Calu3 (cell line): ENCODE measurements at regions of chr13 and their contacts with region 1.

Region 1: GRCh38 chr13:70723732-70724131 is 615.5 kb upstream of the KLHL1 start:
- DNase-seq: no peak
- H3K4me3 Mint-ChIP-seq: no peak overlapping the region
- H3K27ac Mint-ChIP-seq: no peak overlapping the region
- H3K4me1 Mint-ChIP-seq: no peaks in the 10 kb centered on the region
- H3K27me3 Mint-ChIP-seq: no peaks in the 10 kb centered on the region
- CTCF ChIP-seq: no peak

Region 2: DNA sequence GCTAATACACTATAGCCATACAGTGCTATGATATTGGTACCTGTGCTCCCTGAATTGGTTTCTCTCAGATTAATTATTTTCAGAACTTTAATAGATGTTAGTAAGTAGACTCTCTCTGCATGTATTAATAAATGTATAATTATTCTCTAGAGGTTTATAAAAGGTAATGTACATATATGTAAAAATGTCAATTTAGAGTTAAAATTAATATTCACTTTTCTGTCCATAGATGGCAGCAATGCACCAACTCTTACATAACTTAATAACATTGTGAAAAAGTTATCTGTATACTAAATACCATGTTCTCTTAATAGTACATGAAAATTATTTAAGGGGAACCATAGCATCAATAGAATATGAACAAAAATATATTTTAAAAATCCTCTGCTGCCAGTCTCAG is 100.5 kb before region 1 on chr13:
- CTCF ChIA-PET with region 1: no interaction called
- intact Hi-C with region 1: loop called (anchors 10 kb)
- DNase-seq: no peak
- H3K4me3 Mint-ChIP-seq: no peak overlapping the region
- H3K27ac Mint-ChIP-seq: no peak overlapping the region
- H3K4me1 Mint-ChIP-seq: no peaks in the 10 kb centered on the region
- H3K27me3 Mint-ChIP-seq: no peaks in the 10 kb centered on the region
- CTCF ChIP-seq: no peak